ENCODE measurements at regions of chr19 and their contacts with region 1.

Region 1: GRCh38 chr19:19410275-19411192 is 5.1 kb downstream of the GATAD2A start:
- DNase-seq: no peak
- H3K4me3 ChIP-seq: no peak overlapping the region
- H3K27ac ChIP-seq: no peak overlapping the region
- H3K4me1 ChIP-seq: peaks cover 27 to 59% (median 30%) of the 10 kb centered on the region in 3 donors
- H3K27me3 ChIP-seq: no peaks in the 10 kb centered on the region
- CTCF ChIP-seq: no peak
- POLR2A ChIP-seq: no peak

Region 2: GRCh38 chr19:19459707-19460251 is 49.2 kb after region 1 on chr19:
- intact Hi-C with region 1: loop called (anchors 10 kb)
- DNase-seq: no peak
- H3K4me3 ChIP-seq: peak overlapping the region in 2 of 4 donors; percentile 5 to 44
- H3K27ac ChIP-seq: peak overlapping the region; percentile 75 to 87 (median 81)
- H3K4me1 ChIP-seq: peaks cover 69 to 86% (median 70%) of the 10 kb centered on the region in 3 donors
- H3K27me3 ChIP-seq: no peaks in the 10 kb centered on the region
- CTCF ChIP-seq: no peak
- POLR2A ChIP-seq: no peak